ENCODE measurements at regions of chr1 and their contacts with region 1.

Region 1: DNA sequence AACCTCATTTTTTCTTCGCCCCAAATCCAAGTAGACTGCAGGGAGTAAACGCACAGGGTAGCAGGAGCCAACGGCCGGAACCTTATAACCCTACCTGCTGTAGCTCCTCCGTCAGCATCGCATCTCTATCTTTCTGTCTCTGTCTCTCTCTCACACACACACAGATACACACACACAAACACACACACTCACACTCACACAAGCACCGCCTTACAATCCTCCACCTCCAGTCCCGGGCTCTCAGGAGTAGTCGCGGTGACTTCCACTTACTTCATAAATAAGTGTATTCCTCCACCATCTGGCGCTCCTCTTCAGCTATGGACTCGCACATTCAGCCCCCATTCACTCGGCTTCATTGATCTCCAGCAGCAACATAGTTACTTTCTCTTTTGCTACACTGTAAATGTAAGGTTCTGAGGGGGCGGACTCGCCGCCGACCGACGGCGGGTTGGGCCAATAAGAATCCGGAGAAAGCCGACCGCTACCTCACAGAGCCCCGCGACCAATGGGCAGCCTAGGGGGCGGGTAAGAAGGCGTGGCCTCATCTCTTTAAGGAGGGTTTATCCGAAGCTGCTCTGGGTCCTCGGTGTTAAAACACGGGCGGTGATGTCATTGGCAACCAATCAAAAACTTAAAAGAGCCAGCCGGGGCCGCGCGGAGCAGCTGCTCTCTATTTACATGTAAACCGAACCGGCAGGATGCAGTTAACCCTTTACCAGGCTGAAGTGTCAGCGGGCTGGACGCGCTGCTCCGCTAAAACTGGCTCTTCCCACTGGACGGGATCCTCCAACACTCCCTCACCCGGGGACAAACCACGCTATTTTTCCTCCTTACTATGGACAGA is at the start of gene DUSP10:
- DNase-seq: peak; percentile 98 to 100 (median 99)
- ATAC-seq: peak; percentile 89
- H3K4me3 ChIP-seq: peak within 1 kb of the TSS; percentile 74
- H3K27ac ChIP-seq: peak within 1 kb of the TSS; percentile 93
- H3K4me1 ChIP-seq: peaks cover 18 to 19% of the 10 kb centered on the region in 2 experiments
- H3K27me3 ChIP-seq: no peaks in the 10 kb centered on the region
- CTCF ChIP-seq: peak in 1 of 3 experiments; percentile 7; a peak in 1 of 6 replicates
- EP300 ChIP-seq: peak; percentile 25; the same call in 1 of the 2 replicates
- POLR2A ChIP-seq: peak; percentile 80
- RAD21 ChIP-seq: peak; percentile 46 to 47
- polyA plus RNA-seq, gene DUSP10: 3.8 to 5.5 TPM

Region 2: GRCh38 chr1:221543529-221544120 is 198.3 kb before region 1 on chr1:
- CTCF ChIA-PET with region 1: interaction called, 3 read pairs
- POLR2A ChIA-PET with region 1: interaction called, 3 read pairs
- in situ Hi-C with region 1: no loop called
- intact Hi-C with region 1: loop called (anchors 2 kb)
- DNase-seq: peak in 2 of 4 experiments; percentile 8 to 24
- ATAC-seq: peak; percentile 57; the same call in 2 of the 3 replicates
- H3K4me3 ChIP-seq: no peak overlapping the region
- H3K27ac ChIP-seq: no peak overlapping the region
- H3K4me1 ChIP-seq: no peaks in the 10 kb centered on the region
- H3K27me3 ChIP-seq: no peaks in the 10 kb centered on the region
- CTCF ChIP-seq: peak in 2 of 3 experiments; percentile 44 to 66; a peak in 2 of 6 replicates
- EP300 ChIP-seq: no peak
- POLR2A ChIP-seq: no peak
- RAD21 ChIP-seq: peak; percentile 85 to 90

Region 3: DNA sequence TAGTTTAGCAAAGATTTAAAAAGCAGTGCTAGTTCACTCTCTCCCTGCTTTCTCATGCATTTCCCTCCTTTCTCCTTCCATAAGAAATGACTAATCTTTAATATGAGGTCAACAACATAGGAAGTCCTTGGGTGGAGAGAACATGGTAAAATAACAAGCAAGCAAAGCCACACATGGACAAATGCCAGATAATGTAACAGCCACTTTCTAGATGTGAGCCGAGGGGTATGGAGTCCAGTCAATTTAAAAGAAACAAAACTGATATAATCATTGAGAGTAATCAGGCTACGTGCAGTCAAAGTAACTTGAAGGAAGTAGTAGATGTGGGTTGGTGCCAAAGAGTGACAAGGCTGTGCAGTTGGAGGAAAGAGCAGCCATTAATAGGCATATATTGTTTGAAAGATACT is 69.7 kb before region 1 on chr1:
- CTCF ChIA-PET with region 1: interaction called, 3 read pairs
- POLR2A ChIA-PET with region 1: interaction called, 3 read pairs
- in situ Hi-C with region 1: no loop called
- intact Hi-C with region 1: loop called (anchors 5 kb)
- DNase-seq: peak in 1 of 4 experiments; percentile 18
- ATAC-seq: no peak
- H3K4me3 ChIP-seq: no peak overlapping the region
- H3K27ac ChIP-seq: no peak overlapping the region
- H3K4me1 ChIP-seq: peaks cover 0 to 6% of the 10 kb centered on the region in 2 experiments; a peak in 2 of 5 replicates
- H3K27me3 ChIP-seq: no peaks in the 10 kb centered on the region
- CTCF ChIP-seq: no peak
- EP300 ChIP-seq: no peak
- POLR2A ChIP-seq: no peak
- RAD21 ChIP-seq: no peak

Region 4: GRCh38 chr1:221718381-221719277 is 23.3 kb before region 1 on chr1:
- CTCF ChIA-PET with region 1: no interaction called
- POLR2A ChIA-PET with region 1: interaction called, 10 read pairs
- in situ Hi-C with region 1: no loop called
- intact Hi-C with region 1: loop called (anchors 2 kb)
- DNase-seq: no peak
- ATAC-seq: no peak
- H3K4me3 ChIP-seq: no peak overlapping the region
- H3K27ac ChIP-seq: no peak overlapping the region
- H3K4me1 ChIP-seq: peaks cover 8 to 80% of the 10 kb centered on the region in 2 experiments
- H3K27me3 ChIP-seq: no peaks in the 10 kb centered on the region
- CTCF ChIP-seq: no peak
- EP300 ChIP-seq: no peak
- POLR2A ChIP-seq: no peak
- RAD21 ChIP-seq: no peak

Region 5: GRCh38 chr1:221761354-221762002 is 19.5 kb after region 1 on chr1:
- CTCF ChIA-PET with region 1: no interaction called
- POLR2A ChIA-PET with region 1: interaction called, 12 read pairs
- in situ Hi-C with region 1: no loop called
- intact Hi-C with region 1: no loop called
- DNase-seq: no peak
- ATAC-seq: peak; percentile 46
- H3K4me3 ChIP-seq: no peak overlapping the region
- H3K27ac ChIP-seq: 0 out of 3 replicates have a peak overlapping the region, but pooled peaks have one; percentile 9
- H3K4me1 ChIP-seq: peaks cover 2 to 31% of the 10 kb centered on the region in 2 experiments; a peak in 4 of 5 replicates
- H3K27me3 ChIP-seq: no peaks in the 10 kb centered on the region
- CTCF ChIP-seq: no peak
- EP300 ChIP-seq: no peak
- POLR2A ChIP-seq: no peak
- RAD21 ChIP-seq: no peak

Region 6: DNA sequence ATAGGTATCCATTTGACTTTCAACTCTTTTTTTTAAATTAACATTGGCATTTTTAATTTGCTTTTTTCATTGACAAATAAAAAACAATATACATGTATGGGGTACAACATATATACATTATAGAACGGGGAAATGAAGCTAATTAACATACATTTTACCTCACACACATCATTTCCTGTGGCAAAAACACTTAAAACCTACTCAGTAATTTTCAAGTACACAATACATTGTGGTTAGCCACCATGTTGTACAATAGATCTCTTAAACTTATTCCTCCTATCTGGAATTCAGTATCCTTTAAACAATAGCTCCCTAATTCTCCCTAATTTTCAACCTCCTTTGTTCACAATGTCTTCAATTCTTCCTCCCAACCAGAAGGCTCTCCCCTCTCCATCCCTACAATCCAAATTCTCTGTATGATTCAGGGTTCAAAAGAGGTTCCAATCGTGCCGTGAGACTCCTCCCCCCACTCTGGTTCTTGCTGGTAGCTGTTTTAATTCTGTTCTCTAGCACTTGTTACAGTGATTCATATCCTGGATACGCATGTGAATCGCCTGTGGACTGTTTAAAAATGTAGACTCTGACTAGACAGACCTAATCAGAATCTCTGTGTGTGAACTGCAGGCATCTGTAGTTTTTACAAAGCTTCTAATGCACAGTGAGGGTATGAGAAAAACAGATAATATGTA is 87.5 kb after region 1 on chr1:
- CTCF ChIA-PET with region 1: no interaction called
- POLR2A ChIA-PET with region 1: no interaction called
- in situ Hi-C with region 1: no loop called
- intact Hi-C with region 1: no loop called
- DNase-seq: no peak
- ATAC-seq: no peak
- H3K4me3 ChIP-seq: no peak overlapping the region
- H3K27ac ChIP-seq: no peak overlapping the region
- H3K4me1 ChIP-seq: peaks cover 0 to 3% of the 10 kb centered on the region in 2 experiments; a peak in 3 of 5 replicates
- H3K27me3 ChIP-seq: no peaks in the 10 kb centered on the region
- CTCF ChIP-seq: no peak
- EP300 ChIP-seq: no peak
- POLR2A ChIP-seq: no peak
- RAD21 ChIP-seq: no peak

Region 7: GRCh38 chr1:221911714-221912113 is 169.8 kb after region 1 on chr1:
- CTCF ChIA-PET with region 1: no interaction called
- POLR2A ChIA-PET with region 1: no interaction called
- in situ Hi-C with region 1: no loop called
- intact Hi-C with region 1: no loop called
- DNase-seq: no peak
- ATAC-seq: no peak
- H3K4me3 ChIP-seq: no peak overlapping the region
- H3K27ac ChIP-seq: no peak overlapping the region
- H3K4me1 ChIP-seq: no peaks in the 10 kb centered on the region
- H3K27me3 ChIP-seq: no peaks in the 10 kb centered on the region
- CTCF ChIP-seq: no peak
- EP300 ChIP-seq: no peak
- POLR2A ChIP-seq: no peak
- RAD21 ChIP-seq: no peak

Region 8: GRCh38 chr1:222009105-222009730 is 267.3 kb after region 1 on chr1:
- CTCF ChIA-PET with region 1: no interaction called
- POLR2A ChIA-PET with region 1: interaction called, 3 read pairs
- in situ Hi-C with region 1: no loop called
- intact Hi-C with region 1: loop called (anchors 10 kb)
- DNase-seq: peak; percentile 23 to 61 (median 30)
- ATAC-seq: peak; percentile 95
- H3K4me3 ChIP-seq: no peak overlapping the region
- H3K27ac ChIP-seq: no peak overlapping the region
- H3K4me1 ChIP-seq: no peaks in the 10 kb centered on the region
- H3K27me3 ChIP-seq: no peaks in the 10 kb centered on the region
- CTCF ChIP-seq: peak; percentile 38 to 61 (median 46); a peak in 4 of 6 replicates
- EP300 ChIP-seq: no peak
- POLR2A ChIP-seq: no peak
- RAD21 ChIP-seq: peak; percentile 73 to 86

Region 9: GRCh38 chr1:222095606-222096475 is 353.9 kb after region 1 on chr1:
- CTCF ChIA-PET with region 1: no interaction called
- POLR2A ChIA-PET with region 1: no interaction called
- in situ Hi-C with region 1: no loop called
- intact Hi-C with region 1: no loop called
- DNase-seq: peak; percentile 60 to 76 (median 68)
- ATAC-seq: peak; percentile 93
- H3K4me3 ChIP-seq: no peak overlapping the region
- H3K27ac ChIP-seq: no peak overlapping the region
- H3K4me1 ChIP-seq: no peaks in the 10 kb centered on the region
- H3K27me3 ChIP-seq: no peaks in the 10 kb centered on the region; a peak in 1 of 5 replicates
- CTCF ChIP-seq: peak; percentile 67 to 92 (median 78)
- EP300 ChIP-seq: no peak
- POLR2A ChIP-seq: no peak
- RAD21 ChIP-seq: peak; percentile 57 to 62

Measured in K562 (cell line).